Caco-2 (cell line): ENCODE measurements at regions of chr5 and their contacts with region 1.

Region 1: DNA sequence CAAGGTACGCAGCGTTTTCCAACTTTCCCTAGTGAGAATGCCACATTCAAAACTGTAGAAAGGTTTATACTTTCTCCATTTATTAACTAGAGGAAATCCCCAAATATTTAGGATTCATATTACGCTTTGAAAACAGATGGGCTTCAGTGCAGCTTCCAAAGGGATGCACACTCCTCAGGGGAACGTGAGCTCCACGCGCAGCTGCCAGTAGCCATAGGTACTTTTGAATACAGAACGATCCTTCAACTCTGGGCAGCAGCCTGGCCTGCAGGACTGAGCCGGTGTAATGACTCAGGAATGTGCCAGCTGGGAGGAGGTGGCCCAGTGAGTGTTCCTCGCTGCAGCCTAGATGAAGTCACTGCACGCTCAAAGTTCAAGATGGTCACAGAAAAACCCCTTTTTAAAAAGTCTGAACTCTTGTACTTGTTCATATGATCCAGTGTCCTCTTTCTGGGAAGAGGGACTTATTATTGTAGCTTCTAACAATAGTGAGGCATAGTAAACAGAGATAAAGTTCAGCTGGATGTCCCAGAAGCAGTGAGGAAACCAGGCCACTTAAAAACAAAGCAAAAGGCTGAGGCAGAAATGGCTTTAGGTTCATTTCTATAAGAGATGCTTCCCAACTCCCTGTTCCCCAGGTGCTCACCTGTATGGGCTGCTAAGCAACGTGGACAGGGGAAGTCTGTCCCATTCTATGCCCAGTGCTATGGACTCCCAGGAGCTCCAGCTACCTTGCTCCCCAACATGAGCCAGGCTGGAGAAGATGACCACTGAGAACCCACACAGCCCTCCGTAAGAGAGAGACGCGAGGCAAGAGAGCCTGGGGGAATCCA is 130.0 kb downstream of the LHFPL2 start:
- DNase-seq: peak; percentile 65 to 71
- H3K4me3 ChIP-seq: no peak overlapping the region
- H3K4me3 Mint-ChIP-seq: no peak overlapping the region
- H3K27ac Mint-ChIP-seq: peak overlapping the region; percentile 86
- H3K4me1 ChIP-seq: peaks cover 31% of the 10 kb centered on the region
- H3K4me1 Mint-ChIP-seq: peaks cover 15% of the 10 kb centered on the region
- H3K27me3 ChIP-seq: no peaks in the 10 kb centered on the region
- H3K27me3 Mint-ChIP-seq: no peaks in the 10 kb centered on the region
- CTCF ChIP-seq: no peak

Region 2: DNA sequence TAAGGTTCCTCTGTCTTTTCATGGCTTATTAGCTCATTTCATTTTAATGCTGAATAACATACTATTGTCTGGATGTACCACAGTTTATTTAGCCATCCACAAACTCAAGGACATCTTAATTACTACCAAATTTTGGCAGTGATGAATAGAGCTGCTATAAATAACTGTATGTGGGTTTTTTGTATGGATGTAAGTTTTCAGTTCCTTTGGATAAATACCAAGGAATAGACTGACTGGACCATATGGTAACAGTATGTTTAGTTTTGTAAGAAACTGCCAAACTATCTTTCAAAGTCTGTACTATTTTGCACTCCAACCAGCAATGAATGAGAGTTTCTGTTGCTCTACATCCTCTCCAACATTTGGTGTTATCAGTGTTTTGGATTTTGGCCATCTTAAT is 119.5 kb before region 1 on chr5:
- CTCF ChIA-PET with region 1: no interaction called
- POLR2A ChIA-PET with region 1: no interaction called
- intact Hi-C with region 1: no loop called
- DNase-seq: no peak
- H3K4me3 ChIP-seq: no peak overlapping the region
- H3K4me3 Mint-ChIP-seq: no peak overlapping the region
- H3K27ac Mint-ChIP-seq: no peak overlapping the region
- H3K4me1 ChIP-seq: no peaks in the 10 kb centered on the region
- H3K4me1 Mint-ChIP-seq: no peaks in the 10 kb centered on the region
- H3K27me3 ChIP-seq: no peaks in the 10 kb centered on the region
- H3K27me3 Mint-ChIP-seq: no peaks in the 10 kb centered on the region
- CTCF ChIP-seq: no peak

Region 3: DNA sequence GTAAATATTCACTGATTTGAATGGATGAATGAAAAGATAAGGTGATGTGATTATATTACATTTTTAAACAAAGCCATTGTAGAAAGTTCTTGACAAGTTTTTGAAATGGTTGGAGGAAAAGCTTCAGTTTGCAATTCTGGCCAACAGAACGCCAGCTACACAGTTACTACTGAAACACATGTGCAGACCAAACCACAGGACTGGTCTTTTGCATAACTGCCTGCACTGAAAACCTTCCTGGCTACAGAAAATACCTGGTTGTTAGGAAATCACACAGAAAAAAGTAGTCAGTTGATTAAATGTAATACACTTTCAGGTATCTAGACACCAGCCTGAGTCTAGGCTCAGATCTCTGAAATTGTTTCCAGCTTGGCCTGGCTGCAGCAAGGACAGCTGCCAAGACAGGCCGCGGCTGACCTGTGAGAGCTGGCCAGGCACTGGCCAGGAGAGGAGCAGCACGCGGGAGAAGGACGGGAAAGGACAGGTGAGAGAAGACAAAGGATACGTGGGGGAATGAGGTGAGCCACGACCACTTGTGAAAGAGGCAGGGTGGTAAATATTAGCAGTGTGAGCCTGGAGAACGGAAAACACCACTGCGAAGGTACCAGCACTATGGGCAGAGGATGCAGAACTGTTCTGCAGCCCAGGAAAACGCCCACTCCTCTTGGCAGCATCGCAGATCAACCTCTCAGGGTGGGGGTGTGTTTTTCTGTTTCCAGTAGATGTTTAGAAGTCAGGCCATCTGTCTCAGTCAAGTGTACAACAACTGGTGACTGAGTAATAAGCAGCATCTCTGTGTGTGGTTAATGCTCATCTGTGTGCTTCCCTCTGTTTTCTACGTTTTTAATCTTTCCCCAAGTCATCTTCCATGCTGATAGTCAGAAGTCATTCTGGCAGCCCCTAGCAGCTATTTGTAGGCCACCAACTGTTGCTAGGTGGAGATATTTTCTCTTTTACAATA is 20.7 kb before region 1 on chr5:
- CTCF ChIA-PET with region 1: interaction called, 3 read pairs
- POLR2A ChIA-PET with region 1: no interaction called
- intact Hi-C with region 1: loop called (anchors 1 kb)
- DNase-seq: no peak
- H3K4me3 ChIP-seq: no peak overlapping the region
- H3K4me3 Mint-ChIP-seq: no peak overlapping the region
- H3K27ac Mint-ChIP-seq: no peak overlapping the region
- H3K4me1 ChIP-seq: peaks cover 32% of the 10 kb centered on the region
- H3K4me1 Mint-ChIP-seq: peaks cover 55% of the 10 kb centered on the region
- H3K27me3 ChIP-seq: no peaks in the 10 kb centered on the region
- H3K27me3 Mint-ChIP-seq: no peaks in the 10 kb centered on the region
- CTCF ChIP-seq: no peak

Region 4: GRCh38 chr5:78504704-78505677 is 13.6 kb before region 1 on chr5:
- CTCF ChIA-PET with region 1: interaction called, 3 read pairs
- POLR2A ChIA-PET with region 1: no interaction called
- intact Hi-C with region 1: loop called (anchors 1 kb)
- DNase-seq: peak; percentile 87 to 91
- H3K4me3 ChIP-seq: no peak overlapping the region
- H3K4me3 Mint-ChIP-seq: no peak overlapping the region
- H3K27ac Mint-ChIP-seq: no peak overlapping the region
- H3K4me1 ChIP-seq: peaks cover 57% of the 10 kb centered on the region
- H3K4me1 Mint-ChIP-seq: peaks cover 51% of the 10 kb centered on the region
- H3K27me3 ChIP-seq: no peaks in the 10 kb centered on the region
- H3K27me3 Mint-ChIP-seq: no peaks in the 10 kb centered on the region
- CTCF ChIP-seq: no peak